ENCODE measurements at regions of chr12 and their contacts with region 1.

Region 1: GRCh38 chr12:11553871-11554533 is 95.5 kb upstream of the ETV6 start:
- DNase-seq: peak; percentile 34 to 54 (median 48)
- ATAC-seq: peak; percentile 64
- H3K4me3 ChIP-seq: no peak overlapping the region
- H3K27ac ChIP-seq: no peak overlapping the region
- H3K4me1 ChIP-seq: no peaks in the 10 kb centered on the region
- H3K27me3 ChIP-seq: peaks cover 3 to 4% of the 10 kb centered on the region in 2 experiments; a peak in 3 of 5 replicates
- CTCF ChIP-seq: peak; percentile 29 to 65 (median 59); a peak in 5 of 6 replicates
- EP300 ChIP-seq: no peak
- POLR2A ChIP-seq: no peak
- RAD21 ChIP-seq: peak; percentile 24 to 52; a peak in 3 of 4 replicates

Region 2: DNA sequence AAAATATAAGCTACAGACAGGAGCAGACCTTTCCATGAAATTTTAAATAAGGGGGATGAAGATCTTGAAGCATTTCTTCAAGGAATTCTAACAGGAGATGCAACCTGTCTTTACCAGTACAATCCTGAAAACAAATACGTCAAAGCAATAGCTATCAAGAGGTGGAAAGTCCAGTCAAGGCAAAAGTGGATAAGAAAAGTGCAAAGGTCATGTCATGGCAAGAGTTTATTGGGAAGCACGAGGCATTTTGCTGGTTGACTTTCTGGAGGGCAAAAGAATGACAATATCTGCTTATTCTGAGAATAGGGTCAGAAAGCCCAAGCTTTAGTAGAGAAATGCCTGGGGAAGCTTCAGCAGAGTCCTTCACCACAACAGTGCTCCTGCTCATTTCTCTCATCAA is 209.5 kb before region 1 on chr12:
- CTCF ChIA-PET with region 1: no interaction called
- POLR2A ChIA-PET with region 1: no interaction called
- in situ Hi-C with region 1: no loop called
- intact Hi-C with region 1: no loop called
- DNase-seq: no peak
- ATAC-seq: no peak
- H3K4me3 ChIP-seq: no peak overlapping the region
- H3K27ac ChIP-seq: no peak overlapping the region
- H3K4me1 ChIP-seq: no peaks in the 10 kb centered on the region
- H3K27me3 ChIP-seq: no peaks in the 10 kb centered on the region
- CTCF ChIP-seq: no peak
- EP300 ChIP-seq: no peak
- POLR2A ChIP-seq: no peak
- RAD21 ChIP-seq: no peak

Region 3: DNA sequence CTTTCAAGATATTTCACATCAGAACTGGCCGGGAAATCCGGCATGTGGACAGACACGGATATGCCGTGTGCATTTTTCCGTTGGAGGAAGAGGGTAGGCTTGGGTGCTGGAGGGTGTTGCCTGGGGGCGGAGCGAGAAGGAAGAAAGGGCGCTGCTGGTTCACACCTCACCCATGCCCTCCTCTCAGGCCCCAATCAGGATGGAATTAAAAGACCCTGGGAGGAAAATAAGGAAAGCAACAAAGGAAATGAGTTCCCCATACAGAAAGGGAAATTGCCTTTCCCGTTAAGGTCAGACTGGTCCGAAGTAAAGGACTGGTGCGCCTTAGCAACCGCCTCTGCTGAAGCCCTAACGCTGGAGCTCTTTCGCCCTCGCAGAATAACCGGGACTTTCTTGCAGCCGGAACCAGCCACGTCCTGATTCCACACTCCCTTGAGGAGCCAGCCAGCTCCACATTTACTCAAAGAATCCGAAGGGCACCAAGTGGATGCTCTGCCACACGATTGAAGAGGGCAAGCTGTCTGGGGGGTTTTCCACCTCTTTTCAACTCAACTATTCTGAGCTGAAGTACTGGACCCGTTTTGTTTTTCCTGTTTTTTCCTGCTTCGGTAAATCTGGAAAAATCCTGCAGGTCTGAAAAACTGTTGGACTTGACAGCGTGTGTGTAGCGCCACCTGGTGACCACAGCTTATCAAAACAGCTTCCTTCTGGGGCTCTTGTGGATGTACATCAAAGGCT is 479.0 kb after region 1 on chr12:
- CTCF ChIA-PET with region 1: interaction called, 14 read pairs
- POLR2A ChIA-PET with region 1: no interaction called
- in situ Hi-C with region 1: no loop called
- intact Hi-C with region 1: loop called (anchors 10 kb)
- DNase-seq: peak; percentile 61 to 77 (median 70)
- ATAC-seq: peak; percentile 61
- H3K4me3 ChIP-seq: no peak overlapping the region
- H3K27ac ChIP-seq: no peak overlapping the region
- H3K4me1 ChIP-seq: no peaks in the 10 kb centered on the region
- H3K27me3 ChIP-seq: no peaks in the 10 kb centered on the region; a peak in 1 of 5 replicates
- CTCF ChIP-seq: peak; percentile 73 to 85 (median 81)
- EP300 ChIP-seq: no peak
- POLR2A ChIP-seq: no peak
- RAD21 ChIP-seq: peak; percentile 90 to 91

Region 4: GRCh38 chr12:12334367-12335040 is 780.5 kb after region 1 on chr12:
- CTCF ChIA-PET with region 1: no interaction called
- POLR2A ChIA-PET with region 1: no interaction called
- in situ Hi-C with region 1: loop called (anchors 25 kb)
- intact Hi-C with region 1: no loop called
- DNase-seq: peak; percentile 64 to 67 (median 65)
- ATAC-seq: peak; percentile 83
- H3K4me3 ChIP-seq: no peak overlapping the region
- H3K27ac ChIP-seq: no peak overlapping the region
- H3K4me1 ChIP-seq: no peaks in the 10 kb centered on the region; a peak in 1 of 5 replicates
- H3K27me3 ChIP-seq: no peaks in the 10 kb centered on the region
- CTCF ChIP-seq: peak; percentile 80 to 88 (median 80)
- EP300 ChIP-seq: no peak
- POLR2A ChIP-seq: no peak
- RAD21 ChIP-seq: peak; percentile 40 to 71

Region 5: DNA sequence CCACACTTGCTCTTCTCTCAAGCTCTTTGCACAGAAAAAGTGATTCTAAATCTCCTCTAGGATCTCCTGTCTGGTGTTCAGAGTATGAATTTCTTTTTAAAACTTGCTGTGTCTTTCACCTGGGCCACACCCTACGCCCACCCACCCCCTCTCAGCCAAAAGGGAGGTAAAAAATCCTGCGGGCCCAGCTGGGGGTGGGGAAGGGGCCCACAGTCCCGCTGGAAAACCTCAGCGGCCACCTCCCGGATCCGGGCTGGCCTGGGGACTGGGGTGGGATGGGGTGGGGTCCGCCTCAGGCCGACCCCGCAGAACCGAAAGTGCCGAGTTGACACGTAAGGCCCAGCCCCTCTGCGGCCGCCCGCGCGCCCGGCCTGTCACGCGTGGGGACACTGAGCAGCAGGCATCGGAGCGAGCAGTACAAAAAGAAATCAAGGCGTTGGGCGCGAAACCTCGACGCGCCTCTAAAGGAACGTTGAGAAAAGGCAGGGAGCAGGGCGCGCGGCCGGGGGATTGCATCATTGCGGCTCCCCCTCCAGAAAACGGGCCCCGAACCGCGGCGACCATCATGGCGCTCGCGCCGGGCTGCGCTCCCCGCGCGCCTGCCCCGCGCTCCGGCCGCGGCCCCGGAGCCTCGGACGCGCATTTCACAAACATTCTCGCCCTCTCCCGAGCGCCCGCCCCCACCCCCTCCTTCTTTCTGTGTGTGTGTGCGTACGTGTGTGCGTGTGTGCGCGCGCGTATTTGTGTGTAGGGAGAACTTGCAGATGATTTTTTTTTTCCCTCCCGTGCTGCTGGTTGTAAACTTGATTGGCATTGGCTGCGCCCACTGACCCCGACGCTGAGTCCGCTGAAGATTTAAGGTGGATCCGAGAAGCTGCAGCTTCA is 1170.9 kb after region 1 on chr12:
- CTCF ChIA-PET with region 1: no interaction called
- POLR2A ChIA-PET with region 1: no interaction called
- in situ Hi-C with region 1: loop called (anchors 25 kb)
- intact Hi-C with region 1: no loop called
- DNase-seq: peak; percentile 34 to 91 (median 44)
- ATAC-seq: peak; percentile 40
- H3K4me3 ChIP-seq: peak overlapping the region; percentile 57
- H3K27ac ChIP-seq: peak overlapping the region; percentile 97
- H3K4me1 ChIP-seq: peaks cover 11 to 18% of the 10 kb centered on the region in 2 experiments; a peak in 2 of 5 replicates
- H3K27me3 ChIP-seq: no peaks in the 10 kb centered on the region
- CTCF ChIP-seq: no peak
- EP300 ChIP-seq: no peak
- POLR2A ChIP-seq: peak; percentile 52; the same call in 1 of the 2 replicates
- RAD21 ChIP-seq: no peak